ENCODE measurements at regions of chr5 and their contacts with region 1.

Region 1: DNA sequence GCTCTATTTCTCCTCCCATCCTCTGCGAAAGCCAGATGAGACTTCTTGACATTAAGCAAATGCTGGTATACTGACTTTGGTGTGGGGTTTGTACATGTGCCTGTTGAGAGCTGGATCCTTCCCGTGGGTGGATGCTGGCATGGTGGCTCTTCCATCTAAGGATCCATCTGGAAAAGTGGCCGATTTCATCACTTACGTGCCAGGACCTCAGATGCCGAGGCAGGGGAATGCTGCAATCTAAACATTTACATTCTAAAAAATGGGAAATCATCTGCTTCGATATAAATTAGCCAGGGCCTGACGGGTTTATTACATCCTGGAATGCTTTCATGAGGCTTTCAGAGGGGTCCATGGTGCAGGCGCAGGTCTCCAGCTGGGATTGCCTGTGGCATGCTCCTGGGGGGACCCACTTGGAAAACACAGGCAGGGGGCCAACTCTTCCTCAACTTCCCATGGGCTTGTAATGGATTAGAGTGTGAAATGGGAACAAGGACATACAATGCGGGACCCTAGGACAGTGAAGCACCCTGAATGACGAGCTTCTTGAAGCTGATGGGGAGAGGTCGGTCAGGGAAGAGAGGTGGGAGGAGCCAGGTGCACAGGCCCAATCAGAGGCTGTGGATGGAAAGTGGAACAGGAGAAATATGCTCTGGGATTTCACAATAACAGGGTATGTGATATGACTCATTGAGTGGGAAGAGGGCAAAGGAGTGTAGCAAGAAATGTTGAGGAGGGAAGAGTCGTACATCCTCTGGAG is 105.5 kb upstream of the PITX1 start:
- DNase-seq: peak; percentile 70 to 93
- H3K4me3 ChIP-seq: peak overlapping the region; percentile 43; the same call in 1 of the 2 replicates
- H3K27ac ChIP-seq: peak overlapping the region; percentile 97
- H3K4me1 ChIP-seq: peaks cover 85% of the 10 kb centered on the region
- H3K27me3 ChIP-seq: no peaks in the 10 kb centered on the region
- CTCF ChIP-seq: no peak

Region 2: DNA sequence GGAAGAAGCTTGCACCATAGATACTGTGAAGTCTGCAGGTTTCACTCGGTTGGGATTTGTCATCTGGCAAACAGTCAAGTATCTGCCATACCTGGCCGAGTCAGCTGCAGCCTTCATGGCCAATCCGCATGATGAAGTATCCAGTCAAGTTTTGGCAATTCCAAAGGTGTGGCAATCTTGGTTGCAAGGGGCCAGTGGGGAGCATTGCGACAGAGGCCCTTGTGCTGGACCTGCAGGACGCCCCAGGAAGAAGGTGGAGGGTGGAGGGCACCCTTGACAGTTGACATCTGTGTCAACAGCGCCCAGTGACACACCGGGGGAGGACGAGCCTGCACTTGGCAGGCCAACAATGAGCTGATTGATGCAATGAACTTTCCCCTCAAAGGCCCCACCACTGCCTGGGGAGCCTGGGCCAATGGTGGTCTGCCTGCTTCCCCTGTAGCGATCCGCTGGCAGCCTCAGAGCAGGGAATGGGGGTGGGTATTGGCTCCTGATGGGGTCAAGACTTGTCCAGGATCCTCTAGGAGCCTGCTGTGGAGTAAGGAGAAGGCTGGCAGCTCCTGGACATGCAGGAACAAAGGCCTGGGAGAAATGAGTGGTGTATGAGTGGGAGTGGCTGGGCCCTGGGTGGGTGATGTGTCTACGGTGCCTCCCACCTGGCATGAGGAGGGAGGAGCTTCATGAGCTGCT is 17.3 kb after region 1 on chr5:
- CTCF ChIA-PET with region 1: no interaction called
- POLR2A ChIA-PET with region 1: no interaction called
- intact Hi-C with region 1: loop called (anchors 2 kb)
- DNase-seq: peak; percentile 79 to 99
- H3K4me3 ChIP-seq: no peak overlapping the region
- H3K27ac ChIP-seq: peak overlapping the region; percentile 98
- H3K4me1 ChIP-seq: peaks cover 72% of the 10 kb centered on the region
- H3K27me3 ChIP-seq: no peaks in the 10 kb centered on the region
- CTCF ChIP-seq: no peak

Region 3: GRCh38 chr5:135398853-135399523 is 259.4 kb after region 1 on chr5 and contains the start of gene MACROH2A1:
- CTCF ChIA-PET with region 1: no interaction called
- POLR2A ChIA-PET with region 1: no interaction called
- intact Hi-C with region 1: no loop called
- DNase-seq: peak; percentile 64 to 78
- H3K4me3 ChIP-seq: peak within 1 kb of the TSS; percentile 96
- H3K27ac ChIP-seq: peak within 1 kb of the TSS; percentile 69
- H3K4me1 ChIP-seq: peaks cover 21% of the 10 kb centered on the region
- H3K27me3 ChIP-seq: no peaks in the 10 kb centered on the region
- CTCF ChIP-seq: no peak
- total RNA-seq, gene MACROH2A1: 223 and 294 TPM in 2 replicates